Activated CD4-positive, alpha-beta T cell treated with anti-CD3 and anti-CD28 coated beads for 36 hours (primary cell): ENCODE measurements at regions of chr6 and their contacts with region 1.

Region 1: DNA sequence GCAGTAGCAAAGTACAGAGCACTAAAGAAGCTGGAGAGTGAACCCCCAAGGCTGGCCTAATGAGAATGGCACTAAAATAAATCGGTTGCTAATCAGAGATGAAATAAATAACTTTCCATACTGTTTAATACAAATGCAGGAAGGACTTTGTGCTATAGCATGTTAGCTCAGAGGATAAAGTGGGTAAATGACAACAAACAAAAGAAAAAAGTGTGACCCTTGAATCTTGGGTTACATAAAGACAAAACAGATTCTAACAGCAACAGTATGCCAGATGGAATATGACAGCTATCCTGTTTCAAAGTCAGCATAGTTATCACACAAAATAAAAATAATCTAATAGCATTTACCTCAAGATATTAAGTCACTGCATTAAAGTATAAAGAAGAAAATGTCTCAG is 622.7 kb downstream of the PHF3 start:
- DNase-seq: no peak
- ATAC-seq: no peak
- H3K4me3 Mint-ChIP-seq: no peak overlapping the region
- H3K27ac Mint-ChIP-seq: no peak overlapping the region
- H3K4me1 Mint-ChIP-seq: no peaks in the 10 kb centered on the region
- H3K27me3 Mint-ChIP-seq: no peaks in the 10 kb centered on the region

Region 2: GRCh38 chr6:63263444-63263843 is 994.9 kb before region 1 on chr6:
- CTCF ChIA-PET with region 1: no interaction called
- POLR2A ChIA-PET with region 1: no interaction called
- intact Hi-C with region 1: no loop called
- DNase-seq: no peak
- ATAC-seq: no peak
- H3K4me3 Mint-ChIP-seq: no peak overlapping the region
- H3K27ac Mint-ChIP-seq: no peak overlapping the region
- H3K4me1 Mint-ChIP-seq: no peaks in the 10 kb centered on the region
- H3K27me3 Mint-ChIP-seq: no peaks in the 10 kb centered on the region

Region 3: GRCh38 chr6:63504777-63505384 is 753.4 kb before region 1 on chr6:
- CTCF ChIA-PET with region 1: no interaction called
- POLR2A ChIA-PET with region 1: interaction called, 10 read pairs
- intact Hi-C with region 1: no loop called
- DNase-seq: no peak
- ATAC-seq: peak; percentile 80
- H3K4me3 Mint-ChIP-seq: no peak overlapping the region
- H3K27ac Mint-ChIP-seq: no peak overlapping the region
- H3K4me1 Mint-ChIP-seq: peaks cover 6% of the 10 kb centered on the region
- H3K27me3 Mint-ChIP-seq: no peaks in the 10 kb centered on the region

Region 4: DNA sequence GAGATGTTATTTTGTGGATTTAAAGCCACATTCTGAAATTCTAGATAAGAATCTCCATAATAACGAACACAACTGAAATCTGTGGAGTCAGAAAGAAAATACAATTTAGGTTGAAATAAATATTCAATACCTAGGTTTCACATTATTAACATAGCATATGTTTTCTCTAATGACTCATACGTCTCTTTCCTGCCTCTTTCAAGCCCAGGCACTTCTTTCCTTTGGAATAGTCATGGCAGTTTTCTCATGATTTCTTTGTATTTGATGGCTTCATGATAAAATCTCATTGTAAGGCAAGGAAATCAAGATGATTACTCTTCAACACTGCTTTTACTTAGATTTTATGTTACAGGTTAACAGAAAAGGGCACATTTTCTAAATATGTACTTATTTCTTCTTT is 181.0 kb after region 1 on chr6:
- CTCF ChIA-PET with region 1: no interaction called
- POLR2A ChIA-PET with region 1: no interaction called
- intact Hi-C with region 1: no loop called
- DNase-seq: no peak
- ATAC-seq: no peak
- H3K4me3 Mint-ChIP-seq: no peak overlapping the region
- H3K27ac Mint-ChIP-seq: no peak overlapping the region
- H3K4me1 Mint-ChIP-seq: no peaks in the 10 kb centered on the region
- H3K27me3 Mint-ChIP-seq: no peaks in the 10 kb centered on the region

Region 5: DNA sequence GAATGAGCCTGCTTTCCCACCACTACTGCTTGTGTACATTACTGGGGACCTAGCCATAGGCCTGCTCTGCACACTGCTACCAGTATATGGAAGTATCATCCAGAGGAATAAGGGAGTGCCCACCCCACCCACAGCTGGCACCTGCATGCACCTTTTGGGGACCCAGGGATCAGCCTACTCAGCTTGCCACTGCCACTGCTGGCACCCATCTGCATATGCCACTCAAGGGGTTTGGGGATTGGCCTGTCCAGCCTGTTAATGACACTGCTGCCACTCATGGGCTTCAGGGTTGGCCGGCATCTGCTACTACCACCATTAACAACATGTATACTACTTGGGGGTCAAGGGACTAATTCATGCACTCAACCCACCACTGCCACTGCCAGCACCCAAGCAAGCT is 209.4 kb after region 1 on chr6:
- CTCF ChIA-PET with region 1: no interaction called
- POLR2A ChIA-PET with region 1: no interaction called
- intact Hi-C with region 1: no loop called
- DNase-seq: no peak
- ATAC-seq: no peak
- H3K4me3 Mint-ChIP-seq: no peak overlapping the region
- H3K27ac Mint-ChIP-seq: no peak overlapping the region
- H3K4me1 Mint-ChIP-seq: no peaks in the 10 kb centered on the region
- H3K27me3 Mint-ChIP-seq: no peaks in the 10 kb centered on the region